Activated CD4-positive, alpha-beta T cell treated with anti-CD3 and anti-CD28 coated beads for 36 hours (primary cell): ENCODE measurements at regions of chr4 and their contacts with region 1.

Region 1: DNA sequence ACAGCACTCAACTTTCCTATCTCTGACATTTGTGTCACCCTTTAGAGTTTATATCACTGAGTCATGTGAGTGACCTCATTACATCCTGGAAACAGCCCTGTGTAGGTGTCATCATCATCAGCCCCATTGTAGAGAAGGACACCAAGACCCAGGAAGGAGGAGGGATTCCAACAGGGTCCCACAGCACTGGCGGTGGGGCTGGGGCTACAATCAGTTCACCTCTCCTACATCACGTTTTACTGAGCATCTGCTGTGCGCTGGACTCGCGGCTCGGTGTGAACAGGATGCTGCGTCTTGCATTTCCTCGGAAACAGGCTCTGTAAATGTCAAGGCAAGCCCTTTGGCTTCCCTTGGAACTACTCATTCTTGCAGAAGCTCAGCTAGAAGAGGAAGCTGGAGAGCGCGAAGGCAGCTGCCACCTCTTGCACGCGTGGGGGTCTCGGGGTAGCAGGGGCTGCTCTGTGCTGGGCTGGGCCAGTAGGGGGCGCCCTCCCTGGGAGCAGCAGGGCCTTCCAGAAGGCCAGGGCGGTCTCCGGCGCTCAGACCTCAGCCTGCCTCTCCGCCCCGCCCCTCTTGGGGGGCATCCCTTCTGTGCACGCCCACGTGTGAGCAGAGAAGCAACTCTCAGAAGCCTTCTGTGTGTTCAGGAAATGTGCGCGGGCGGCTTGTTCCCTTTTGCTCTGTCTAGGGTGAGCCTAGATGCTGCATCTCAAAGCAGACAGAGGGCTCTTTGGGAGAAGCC is 29.0 kb downstream of the REELD1 start:
- DNase-seq: peak; percentile 90
- ATAC-seq: peak; percentile 79
- H3K4me3 Mint-ChIP-seq: peak overlapping the region; percentile 66
- H3K27ac Mint-ChIP-seq: peak overlapping the region; percentile 85
- H3K4me1 Mint-ChIP-seq: peaks cover 41% of the 10 kb centered on the region
- H3K27me3 Mint-ChIP-seq: no peaks in the 10 kb centered on the region

Region 2: GRCh38 chr4:145930592-145930991 is 312.7 kb before region 1 on chr4:
- CTCF ChIA-PET with region 1: no interaction called
- POLR2A ChIA-PET with region 1: no interaction called
- intact Hi-C with region 1: no loop called
- DNase-seq: no peak
- ATAC-seq: no peak
- H3K4me3 Mint-ChIP-seq: no peak overlapping the region
- H3K27ac Mint-ChIP-seq: no peak overlapping the region
- H3K4me1 Mint-ChIP-seq: peaks cover 65% of the 10 kb centered on the region
- H3K27me3 Mint-ChIP-seq: no peaks in the 10 kb centered on the region

Region 3: GRCh38 chr4:146175541-146176453 is 67.5 kb before region 1 on chr4 and contains the start of gene LSM6:
- CTCF ChIA-PET with region 1: no interaction called
- POLR2A ChIA-PET with region 1: no interaction called
- intact Hi-C with region 1: loop called (anchors 2 kb)
- DNase-seq: peak; percentile 91
- ATAC-seq: peak; percentile 94
- H3K4me3 Mint-ChIP-seq: peak within 1 kb of the TSS; percentile 82
- H3K27ac Mint-ChIP-seq: peak within 1 kb of the TSS; percentile 85
- H3K4me1 Mint-ChIP-seq: peaks cover 49% of the 10 kb centered on the region
- H3K27me3 Mint-ChIP-seq: no peaks in the 10 kb centered on the region
- total RNA-seq, gene LSM6: 64.9 to 66.9 TPM

Region 4: GRCh38 chr4:146458594-146458993 is 215.3 kb after region 1 on chr4:
- CTCF ChIA-PET with region 1: no interaction called
- POLR2A ChIA-PET with region 1: no interaction called
- intact Hi-C with region 1: loop called in 1 of 2 experiments (anchors 1 kb)
- DNase-seq: no peak
- ATAC-seq: peak; percentile 96
- H3K4me3 Mint-ChIP-seq: peak overlapping the region; percentile 62
- H3K27ac Mint-ChIP-seq: peak overlapping the region; percentile 93
- H3K4me1 Mint-ChIP-seq: peaks cover 24% of the 10 kb centered on the region
- H3K27me3 Mint-ChIP-seq: no peaks in the 10 kb centered on the region

Region 5: DNA sequence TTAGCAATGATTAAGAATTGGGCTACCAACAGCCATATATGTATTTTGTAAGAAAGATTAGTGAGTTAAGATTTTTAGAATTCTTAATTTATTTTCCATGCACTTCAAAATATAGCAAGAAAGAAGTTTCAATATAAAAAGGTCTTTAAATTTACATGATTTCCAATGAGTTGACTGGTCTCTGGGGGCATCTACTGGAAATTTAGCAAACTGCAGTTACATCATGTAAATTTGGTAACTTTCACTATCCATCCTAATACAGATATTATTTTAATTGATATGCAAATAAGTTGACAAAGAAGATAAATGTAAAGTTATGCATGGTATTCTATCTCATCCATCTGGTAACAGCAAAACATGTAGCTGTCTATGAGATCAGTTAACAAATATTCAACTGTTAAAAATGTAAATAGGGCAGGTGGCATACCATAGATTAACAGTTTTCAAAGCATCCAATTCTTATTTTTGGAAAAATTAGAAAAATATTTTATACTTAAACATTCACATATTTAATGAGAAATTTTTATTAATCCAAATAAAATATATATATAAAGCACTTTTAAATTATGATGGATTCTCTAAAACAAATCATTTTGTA is 673.3 kb after region 1 on chr4:
- CTCF ChIA-PET with region 1: no interaction called
- POLR2A ChIA-PET with region 1: no interaction called
- intact Hi-C with region 1: loop called (anchors 1 kb)
- DNase-seq: peak; percentile 23
- ATAC-seq: no peak
- H3K4me3 Mint-ChIP-seq: no peak overlapping the region
- H3K27ac Mint-ChIP-seq: no peak overlapping the region
- H3K4me1 Mint-ChIP-seq: no peaks in the 10 kb centered on the region
- H3K27me3 Mint-ChIP-seq: peaks cover 8% of the 10 kb centered on the region

Region 6: GRCh38 chr4:147096667-147097604 is 853.6 kb after region 1 on chr4:
- CTCF ChIA-PET with region 1: interaction called, 8 read pairs
- POLR2A ChIA-PET with region 1: no interaction called
- intact Hi-C with region 1: loop called in 1 of 2 experiments (anchors 1 kb)
- DNase-seq: no peak
- ATAC-seq: no peak
- H3K4me3 Mint-ChIP-seq: no peak overlapping the region
- H3K27ac Mint-ChIP-seq: no peak overlapping the region
- H3K4me1 Mint-ChIP-seq: no peaks in the 10 kb centered on the region
- H3K27me3 Mint-ChIP-seq: peaks cover 17% of the 10 kb centered on the region

Region 7: DNA sequence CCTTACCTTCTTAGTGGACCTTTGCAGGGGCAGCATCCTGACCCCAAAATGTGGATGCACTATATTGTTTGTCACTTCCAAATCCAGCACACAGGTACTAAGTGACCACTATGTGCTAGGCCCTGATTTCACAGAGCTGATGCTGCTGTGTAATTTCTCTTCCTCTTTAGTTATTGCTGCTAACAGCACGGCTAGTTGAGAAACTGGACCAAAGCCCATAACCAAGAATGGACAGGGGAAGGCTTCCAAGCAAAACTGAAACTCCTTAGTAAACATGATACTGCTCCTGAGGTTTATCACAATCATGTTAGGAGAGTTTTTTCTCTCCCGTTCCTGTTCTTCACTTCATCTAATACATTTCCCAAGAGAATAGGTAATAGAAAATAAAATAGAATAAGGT is 875.2 kb after region 1 on chr4:
- CTCF ChIA-PET with region 1: no interaction called
- POLR2A ChIA-PET with region 1: no interaction called
- intact Hi-C with region 1: no loop called
- DNase-seq: no peak
- ATAC-seq: no peak
- H3K4me3 Mint-ChIP-seq: no peak overlapping the region
- H3K27ac Mint-ChIP-seq: no peak overlapping the region
- H3K4me1 Mint-ChIP-seq: no peaks in the 10 kb centered on the region
- H3K27me3 Mint-ChIP-seq: peaks cover 4% of the 10 kb centered on the region